ENCODE measurements at regions of chr17 and their contacts with region 1.

Region 1: DNA sequence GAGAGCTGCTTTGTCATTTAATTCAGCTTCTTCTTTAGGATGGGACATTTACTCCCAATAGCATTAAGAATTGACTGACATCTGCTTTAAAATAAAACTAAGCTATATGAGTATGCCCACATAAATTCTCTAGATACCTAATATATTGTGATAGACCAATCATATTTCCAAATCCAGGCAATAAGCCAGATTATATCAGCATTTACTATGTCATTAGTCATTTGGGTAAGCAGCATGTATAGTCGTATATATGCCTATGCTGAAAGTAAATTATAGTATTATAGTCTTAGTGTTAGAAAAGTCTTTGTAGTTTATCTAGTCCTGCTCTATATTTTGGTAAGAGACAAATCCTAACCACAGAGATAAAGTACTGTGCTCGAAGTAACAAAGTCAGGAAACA is 958.1 kb downstream of the KCNJ2 start:
- DNase-seq: no peak
- H3K4me3 ChIP-seq: no peak overlapping the region
- H3K27ac ChIP-seq: no peak overlapping the region
- H3K4me1 ChIP-seq: no peaks in the 10 kb centered on the region
- H3K27me3 ChIP-seq: no peaks in the 10 kb centered on the region
- CTCF ChIP-seq: no peak
- POLR2A ChIP-seq: no peak

Region 2: DNA sequence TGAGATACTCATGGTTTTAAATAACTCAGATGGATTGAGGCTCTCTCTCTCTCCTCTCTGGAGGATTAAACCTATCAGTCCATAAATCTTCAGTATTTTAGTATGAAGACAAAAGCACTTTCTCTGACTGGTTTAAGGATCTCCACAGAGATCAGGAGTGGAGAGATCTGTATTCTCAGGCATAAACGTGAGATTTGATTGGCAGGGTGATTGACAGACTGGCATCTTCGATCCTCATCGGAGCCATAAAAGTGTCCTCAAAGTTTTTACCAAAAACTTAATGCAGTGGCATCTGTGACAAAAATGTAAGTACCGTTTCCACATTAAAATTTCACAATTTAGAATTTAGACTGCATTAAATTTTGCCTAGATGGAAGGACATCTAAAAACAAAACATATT is 88.0 kb before region 1 on chr17:
- intact Hi-C with region 1: no loop called
- DNase-seq: no peak
- H3K4me3 ChIP-seq: no peak overlapping the region
- H3K27ac ChIP-seq: no peak overlapping the region
- H3K4me1 ChIP-seq: no peaks in the 10 kb centered on the region
- H3K27me3 ChIP-seq: no peaks in the 10 kb centered on the region
- CTCF ChIP-seq: no peak
- POLR2A ChIP-seq: no peak

Region 3: GRCh38 chr17:71110326-71110725 is 17.1 kb before region 1 on chr17:
- intact Hi-C with region 1: loop called (anchors 2 kb)
- DNase-seq: no peak
- H3K4me3 ChIP-seq: no peak overlapping the region
- H3K27ac ChIP-seq: no peak overlapping the region
- H3K4me1 ChIP-seq: no peaks in the 10 kb centered on the region
- H3K27me3 ChIP-seq: no peaks in the 10 kb centered on the region
- CTCF ChIP-seq: no peak
- POLR2A ChIP-seq: no peak

Measured in breast epithelium (tissue), 4 donors.